Heart left ventricle (tissue), 16 donors: ENCODE measurements at regions of chr5 and their contacts with region 1.

Region 1: DNA sequence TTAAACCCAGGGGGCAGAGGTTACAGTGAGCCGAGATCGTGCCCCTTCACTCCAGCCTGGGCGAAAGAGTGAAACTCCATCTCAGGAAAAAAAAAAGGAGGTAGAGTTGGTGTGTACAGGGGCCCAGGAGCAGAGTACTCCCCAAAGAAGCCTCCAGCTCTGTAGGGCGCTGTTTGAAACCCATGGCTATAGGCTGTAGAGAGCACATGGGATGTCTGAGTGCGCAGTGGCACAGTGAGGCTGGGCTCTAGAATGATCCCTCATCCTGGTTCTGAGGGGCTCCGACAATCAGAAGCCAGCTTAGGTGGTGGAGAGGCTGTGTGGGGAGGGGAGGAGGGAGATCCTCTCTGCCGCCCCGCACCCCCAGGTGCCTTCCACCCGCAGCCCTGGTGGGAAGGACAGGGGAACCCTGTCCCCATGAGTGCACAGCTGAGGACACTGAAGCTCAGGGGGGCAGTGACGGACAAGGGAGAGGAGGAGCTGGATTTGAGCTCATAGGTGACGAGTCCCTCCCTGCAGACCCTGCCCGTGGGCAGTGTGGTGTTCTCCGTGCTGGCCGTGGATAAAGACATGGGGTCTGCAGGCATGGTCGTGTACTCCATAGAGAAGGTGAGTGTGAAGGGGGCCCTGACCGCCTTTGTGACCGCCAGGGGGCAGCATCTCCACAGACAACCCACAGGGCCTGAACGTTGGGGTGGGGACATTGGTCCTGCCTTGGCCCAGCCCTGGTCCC is 24.6 kb downstream of the CDHR2 start:
- DNase-seq: peak; percentile 59 to 85 (median 66)
- ATAC-seq: peak; percentile 53 to 89 (median 82)
- H3K4me3 ChIP-seq: no peak overlapping the region
- H3K27ac ChIP-seq: no peak overlapping the region
- H3K4me1 ChIP-seq: peaks cover 0 to 4% (median 0%) of the 10 kb centered on the region in 12 donors
- H3K27me3 ChIP-seq: peaks cover 0 to 13% (median 4%) of the 10 kb centered on the region in 9 donors
- CTCF ChIP-seq: peak; percentile 63 to 87 (median 80)
- POLR2A ChIP-seq: no peak

Region 2: DNA sequence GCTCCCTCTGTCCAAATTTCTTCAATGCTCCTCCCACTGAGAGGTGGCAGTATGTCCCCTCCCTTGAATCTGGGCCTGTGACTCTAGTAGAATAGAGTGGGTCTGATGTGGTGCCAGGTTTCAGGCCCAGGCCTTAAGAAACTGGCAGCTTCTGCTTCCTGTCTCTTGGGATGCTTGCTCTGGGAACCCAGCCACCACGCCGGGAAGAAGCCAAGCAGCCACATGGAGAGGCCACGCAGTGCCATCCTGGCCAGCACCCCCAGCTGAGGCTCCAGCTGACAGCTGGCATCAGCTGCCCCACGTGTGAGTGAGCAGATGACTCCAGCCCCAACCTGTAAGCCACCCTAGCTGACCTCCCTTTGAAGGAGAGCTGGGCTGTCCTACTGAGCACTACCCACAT is 66.3 kb after region 1 on chr5:
- intact Hi-C with region 1: loop called in 7 of 10 experiments (anchors 2 to 10 kb)
- DNase-seq: peak; percentile 60 to 88 (median 68)
- ATAC-seq: peak; percentile 76 to 97 (median 81)
- H3K4me3 ChIP-seq: no peak overlapping the region
- H3K27ac ChIP-seq: peak overlapping the region in 1 of 12 donors; percentile 12
- H3K4me1 ChIP-seq: peaks cover 0 to 11% (median 0%) of the 10 kb centered on the region in 12 donors
- H3K27me3 ChIP-seq: peaks cover 0 to 7% (median 0%) of the 10 kb centered on the region in 9 donors
- CTCF ChIP-seq: no peak
- POLR2A ChIP-seq: no peak

Region 3: GRCh38 chr5:176647030-176647866 is 73.5 kb after region 1 on chr5 and contains the start of gene TSPAN17:
- intact Hi-C with region 1: loop called in 8 of 10 experiments (anchors 2 to 10 kb)
- DNase-seq: peak; percentile 100
- ATAC-seq: peak; percentile 98 to 100 (median 98)
- H3K4me3 ChIP-seq: peak within 1 kb of the TSS; percentile 43 to 96 (median 84)
- H3K27ac ChIP-seq: peak within 1 kb of the TSS in 11 of 12 donors; percentile 54 to 88 (median 84)
- H3K4me1 ChIP-seq: peaks cover 0 to 32% (median 14%) of the 10 kb centered on the region in 12 donors
- H3K27me3 ChIP-seq: no peaks in the 10 kb centered on the region
- CTCF ChIP-seq: peak in 8 of 12 donors; percentile 26 to 63 (median 40)
- POLR2A ChIP-seq: peak; percentile 29 to 83
- total RNA-seq, gene TSPAN17: 22.2 to 53.1 (median 30.9) TPM